Right lobe of liver (tissue), 6 donors: ENCODE measurements at regions of chr1 and their contacts with region 1.

Region 1: DNA sequence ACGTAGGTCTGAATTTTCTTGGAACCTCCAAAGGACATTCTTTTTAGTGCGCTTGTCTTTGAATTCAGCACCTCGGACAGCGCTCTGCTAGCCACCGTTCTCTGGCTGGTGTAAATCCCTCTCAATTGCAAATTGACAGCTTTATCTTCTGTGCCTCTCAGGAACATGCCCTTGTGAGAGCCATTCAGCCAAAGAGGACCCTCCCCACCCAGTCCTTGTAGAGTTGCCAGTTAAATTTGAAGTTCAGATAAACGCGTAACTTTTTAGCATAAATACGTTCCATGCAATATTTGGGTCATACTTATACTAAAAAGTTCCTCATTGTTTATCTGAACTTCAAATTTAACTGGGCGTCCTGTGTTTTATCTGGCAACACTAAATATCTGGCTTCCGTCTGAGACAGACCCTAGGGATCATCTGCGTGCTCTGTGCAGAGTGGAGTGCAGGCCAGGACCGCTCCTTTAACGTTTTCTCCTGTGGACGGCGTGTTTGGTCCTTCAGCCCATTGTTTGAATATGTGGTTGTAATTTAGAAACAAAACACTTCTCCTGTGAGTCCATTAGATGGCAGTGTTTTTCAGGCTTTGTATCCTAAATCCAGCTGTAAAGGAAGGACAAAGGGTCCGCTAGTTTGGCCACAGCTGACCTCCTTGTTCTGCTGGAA is 7.0 kb downstream of the KCNAB2 start:
- DNase-seq: peak in 1 of 3 donors; percentile 55
- ATAC-seq: peak; percentile 39 to 54 (median 46)
- H3K4me3 ChIP-seq: no peak overlapping the region
- H3K27ac ChIP-seq: no peak overlapping the region
- H3K4me1 ChIP-seq: no peaks in the 10 kb centered on the region
- H3K27me3 ChIP-seq: no peaks in the 10 kb centered on the region
- CTCF ChIP-seq: peak; percentile 22 to 42 (median 30)
- POLR2A ChIP-seq: no peak

Region 2: DNA sequence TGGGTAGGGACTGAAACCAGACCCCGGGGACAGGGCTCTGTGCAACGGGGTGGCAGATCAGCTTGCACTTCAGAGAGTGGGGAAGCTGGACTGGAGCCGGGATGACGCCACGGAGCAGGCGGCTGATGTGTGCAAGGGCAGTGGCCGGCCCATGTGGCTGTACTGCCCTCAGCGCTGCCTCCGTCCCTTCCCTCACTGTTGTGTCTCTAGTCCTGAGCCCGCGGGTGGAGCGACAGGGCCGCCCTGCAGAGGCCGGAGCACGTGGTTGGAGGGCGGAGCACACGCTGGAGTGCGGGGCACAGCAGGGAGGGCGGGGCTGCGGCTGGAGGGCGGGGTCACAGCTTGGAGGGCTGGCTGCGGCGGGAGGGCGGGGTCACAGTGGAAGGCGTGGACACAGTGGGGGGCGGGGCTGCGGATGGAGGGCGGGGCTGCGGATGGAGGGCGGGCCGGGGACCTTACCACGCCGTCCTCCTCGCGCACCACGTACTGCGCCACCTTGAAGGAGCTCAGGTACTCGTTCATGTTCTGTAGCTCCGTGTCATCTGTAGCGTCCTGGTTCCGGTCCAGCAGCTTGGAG is 75.0 kb after region 1 on chr1:
- intact Hi-C with region 1: no loop called
- DNase-seq: peak; percentile 59 to 77 (median 67)
- ATAC-seq: peak; percentile 72 to 92 (median 84)
- H3K4me3 ChIP-seq: no peak overlapping the region
- H3K27ac ChIP-seq: no peak overlapping the region
- H3K4me1 ChIP-seq: no peaks in the 10 kb centered on the region
- H3K27me3 ChIP-seq: no peaks in the 10 kb centered on the region
- CTCF ChIP-seq: no peak
- POLR2A ChIP-seq: no peak

Region 3: GRCh38 chr1:6239950-6240768 is 187.5 kb after region 1 on chr1:
- intact Hi-C with region 1: loop called (anchors 5 to 10 kb)
- DNase-seq: no peak
- ATAC-seq: no peak
- H3K4me3 ChIP-seq: no peak overlapping the region
- H3K27ac ChIP-seq: no peak overlapping the region
- H3K4me1 ChIP-seq: peaks cover 0 to 7% (median 0%) of the 10 kb centered on the region in 4 donors
- H3K27me3 ChIP-seq: peaks cover 5 to 28% of the 10 kb centered on the region in 2 donors
- CTCF ChIP-seq: no peak
- POLR2A ChIP-seq: no peak